Mucosa of descending colon (tissue), 3 donors: ENCODE measurements at regions of chr2 and their contacts with region 1.

Region 1: DNA sequence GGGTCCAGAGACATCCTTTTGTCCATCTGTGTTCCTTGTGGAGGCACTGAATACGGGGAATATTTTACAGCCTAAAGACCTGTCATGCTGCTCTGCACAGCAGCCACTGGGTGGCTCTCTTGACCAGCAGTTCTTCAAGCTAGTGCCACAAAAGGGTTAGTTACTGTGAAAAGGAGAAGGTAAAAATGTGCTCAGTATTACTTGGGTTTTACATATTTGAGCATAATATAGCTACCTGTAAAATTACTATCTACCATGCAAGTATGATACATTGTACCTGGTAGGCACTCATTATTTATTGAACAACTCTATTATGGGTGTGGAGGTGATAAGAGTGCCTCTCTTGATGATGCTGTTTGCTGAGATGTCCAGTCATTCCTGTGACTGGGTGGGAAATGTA is 23.6 kb downstream of the FZD5 start:
- DNase-seq: peak in 2 of 3 donors; percentile 48 to 60
- ATAC-seq: peak; percentile 84
- H3K4me3 ChIP-seq: no peak overlapping the region
- H3K4me1 ChIP-seq: no peaks in the 10 kb centered on the region
- CTCF ChIP-seq: peak; percentile 59

Region 2: DNA sequence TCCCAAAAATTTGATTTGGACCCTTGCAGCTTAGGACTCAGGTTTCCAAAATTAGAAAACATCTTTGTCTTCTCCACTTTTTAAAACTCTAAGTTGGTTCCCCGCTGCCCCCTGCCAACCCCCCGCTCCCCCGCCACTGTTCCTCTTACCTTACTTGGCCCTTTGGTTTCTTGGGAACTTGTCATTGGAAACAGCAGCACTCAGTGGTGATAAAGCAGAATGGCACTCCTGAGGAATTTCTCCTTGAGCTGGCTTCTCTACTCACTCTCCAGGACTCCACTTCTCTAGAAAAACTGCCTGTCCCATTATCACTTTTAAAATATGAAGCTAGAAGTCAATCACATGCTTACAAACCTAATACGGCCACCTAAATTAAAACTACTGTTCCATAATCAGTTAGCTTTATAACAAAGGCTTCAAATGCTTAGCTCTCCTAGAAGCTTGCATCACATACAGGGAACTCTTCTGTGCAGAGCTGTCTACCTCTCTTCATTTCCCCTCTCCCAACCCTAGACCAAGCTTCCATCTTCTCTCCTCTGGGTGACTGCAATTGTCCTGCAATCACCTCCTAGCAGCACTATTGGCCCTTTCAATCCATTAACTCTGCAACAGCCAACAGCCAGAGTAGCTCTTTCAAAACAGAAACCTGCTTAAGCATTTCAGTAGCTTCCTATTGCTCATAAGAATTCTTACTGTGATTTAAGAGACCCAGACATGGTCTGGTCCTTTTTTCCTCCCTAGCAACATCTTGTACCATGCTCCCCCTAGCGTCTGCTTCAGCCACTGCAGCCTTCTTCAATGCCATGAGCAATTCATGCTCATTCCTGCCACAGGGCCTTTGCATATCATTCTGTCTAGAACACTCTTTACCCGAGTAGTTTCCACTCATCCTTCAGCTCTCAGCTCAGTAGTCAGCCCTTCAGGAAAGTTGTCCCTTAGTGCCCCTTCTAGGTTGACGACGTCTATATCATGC is 294.4 kb after region 1 on chr2:
- intact Hi-C with region 1: loop called (anchors 10 kb)
- DNase-seq: peak; percentile 60 to 83 (median 75)
- ATAC-seq: peak; percentile 89
- H3K4me3 ChIP-seq: no peak overlapping the region
- H3K4me1 ChIP-seq: no peaks in the 10 kb centered on the region
- CTCF ChIP-seq: peak; percentile 55

Region 3: DNA sequence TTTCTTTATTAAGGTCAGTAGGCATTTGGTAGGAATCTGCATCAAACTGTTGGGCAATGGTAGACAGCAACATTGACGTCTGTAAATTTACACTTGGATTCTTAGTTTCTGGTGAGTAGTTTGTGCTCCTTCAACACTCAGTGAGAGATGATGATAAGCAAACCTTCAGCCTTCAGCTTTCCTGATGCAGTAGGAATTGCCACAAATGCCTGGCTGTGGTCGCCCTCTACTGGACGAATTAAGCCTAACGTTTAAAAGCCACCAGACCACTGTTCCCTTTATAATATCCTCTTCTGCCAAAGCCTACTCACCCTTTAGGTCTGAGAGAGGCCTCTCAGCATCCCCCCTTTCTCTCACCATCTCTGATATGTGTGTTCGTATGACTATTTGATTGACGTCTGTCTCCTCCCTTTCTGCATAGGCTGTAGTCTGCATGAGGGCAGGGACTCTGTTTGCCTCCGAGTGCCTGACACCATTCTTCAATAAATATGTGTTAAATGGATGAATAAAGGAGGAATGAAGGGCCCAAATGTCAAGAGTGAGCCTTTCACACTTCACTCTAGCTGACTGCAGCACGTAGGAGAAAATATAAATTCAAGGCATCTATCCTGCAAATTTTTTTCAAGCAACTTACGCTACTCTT is 326.2 kb after region 1 on chr2:
- intact Hi-C with region 1: loop called in 1 of 2 experiments (anchors 10 kb)
- DNase-seq: peak in 2 of 3 donors; percentile 57 to 87
- ATAC-seq: peak; percentile 87
- H3K4me3 ChIP-seq: no peak overlapping the region
- H3K4me1 ChIP-seq: no peaks in the 10 kb centered on the region
- CTCF ChIP-seq: peak; percentile 42